Activated CD4-positive, alpha-beta memory T cell treated with anti-CD3 and anti-CD28 coated beads, Interleukin-2, amount 10 ng/mL, durations not matched to agents 7 days and 5 days (primary cell): ENCODE measurements at regions of chr17 and their contacts with region 1.

Region 1: GRCh38 chr17:7014261-7014994 is 2.0 kb downstream of the RNASEK start:
- DNase-seq: peak; percentile 99
- H3K4me3 Mint-ChIP-seq: peak overlapping the region; percentile 98
- H3K27ac Mint-ChIP-seq: peak overlapping the region; percentile 97
- H3K4me1 Mint-ChIP-seq: peaks cover 64% of the 10 kb centered on the region
- H3K27me3 Mint-ChIP-seq: no peaks in the 10 kb centered on the region

Region 2: DNA sequence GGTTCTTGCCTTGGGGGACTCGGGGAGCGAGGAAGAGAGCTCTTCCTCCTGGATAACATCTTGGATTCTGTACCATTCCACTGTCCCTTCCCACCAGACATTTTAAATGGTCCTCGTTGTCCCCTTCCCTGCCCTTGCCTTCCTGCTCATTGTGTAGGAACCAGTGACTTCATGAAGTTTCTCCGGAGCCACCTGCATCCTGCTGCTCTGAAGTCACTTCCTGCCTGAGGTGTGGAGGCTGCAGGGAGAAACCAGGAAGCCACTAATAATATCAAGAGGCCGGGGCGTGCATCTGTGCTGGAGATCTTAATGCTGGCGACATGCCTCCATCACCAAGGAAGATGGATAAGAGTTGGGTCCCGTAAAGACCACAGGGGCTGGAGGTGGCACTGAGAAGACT is 15.2 kb after region 1 on chr17:
- CTCF ChIA-PET with region 1: interaction called, 6 read pairs
- POLR2A ChIA-PET with region 1: interaction called, 32 read pairs
- DNase-seq: peak; percentile 71
- H3K4me3 Mint-ChIP-seq: peak overlapping the region; percentile 65
- H3K27ac Mint-ChIP-seq: peak overlapping the region; percentile 81
- H3K4me1 Mint-ChIP-seq: peaks cover 60% of the 10 kb centered on the region
- H3K27me3 Mint-ChIP-seq: no peaks in the 10 kb centered on the region

Region 3: DNA sequence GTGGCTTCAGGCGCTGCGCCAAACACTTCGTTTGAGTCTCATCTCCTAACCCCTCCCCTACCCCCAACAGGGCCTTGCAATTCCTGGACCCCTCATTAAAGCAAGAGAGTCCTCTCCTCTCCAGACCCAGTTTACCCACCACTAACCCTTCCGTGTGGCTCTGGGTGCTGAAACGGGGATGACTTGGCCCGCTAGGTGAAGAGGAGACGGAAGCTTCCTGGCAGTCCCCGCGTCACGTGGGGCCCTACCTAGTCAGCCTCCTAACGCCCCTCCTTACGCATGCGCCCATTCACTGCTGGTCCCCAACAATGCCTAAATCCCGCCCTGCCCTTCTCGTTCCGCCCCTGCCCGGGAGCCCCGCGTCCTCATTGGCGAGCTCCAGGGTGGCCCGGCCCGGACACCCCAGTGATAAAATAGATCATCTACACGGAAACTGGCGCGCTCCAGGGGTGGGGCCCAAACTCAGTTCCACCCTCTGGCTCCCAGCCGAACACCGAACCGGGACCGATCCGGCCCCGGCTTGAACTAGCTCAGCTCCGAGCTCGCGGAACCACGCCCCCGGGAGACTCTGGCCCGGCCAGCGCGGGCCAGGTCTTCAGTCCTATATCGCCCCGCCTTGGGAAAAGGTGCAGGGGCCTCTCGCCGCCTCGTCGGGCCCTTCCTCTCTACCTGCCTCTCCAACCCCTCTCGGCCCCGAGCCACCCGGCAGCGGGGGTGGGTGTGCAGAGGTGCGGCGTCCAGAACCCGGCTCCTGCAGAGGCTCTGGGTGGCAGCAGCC is 21.4 kb after region 1 on chr17 and contains the start of gene SLC16A13:
- CTCF ChIA-PET with region 1: interaction called, 9 read pairs
- POLR2A ChIA-PET with region 1: interaction called, 54 read pairs
- DNase-seq: peak; percentile 99
- H3K4me3 Mint-ChIP-seq: peak within 1 kb of the TSS; percentile 85
- H3K27ac Mint-ChIP-seq: peak within 1 kb of the TSS; percentile 96
- H3K4me1 Mint-ChIP-seq: peaks cover 60% of the 10 kb centered on the region
- H3K27me3 Mint-ChIP-seq: no peaks in the 10 kb centered on the region
- total RNA-seq, gene SLC16A13: 26.8 to 28.9 TPM